ENCODE measurements at regions of chr9 and their contacts with region 1.

Region 1: GRCh38 chr9:96758845-96759673 is 18.8 kb downstream of the ZNF510 start:
- DNase-seq: no peak
- ATAC-seq: no peak

Region 2: DNA sequence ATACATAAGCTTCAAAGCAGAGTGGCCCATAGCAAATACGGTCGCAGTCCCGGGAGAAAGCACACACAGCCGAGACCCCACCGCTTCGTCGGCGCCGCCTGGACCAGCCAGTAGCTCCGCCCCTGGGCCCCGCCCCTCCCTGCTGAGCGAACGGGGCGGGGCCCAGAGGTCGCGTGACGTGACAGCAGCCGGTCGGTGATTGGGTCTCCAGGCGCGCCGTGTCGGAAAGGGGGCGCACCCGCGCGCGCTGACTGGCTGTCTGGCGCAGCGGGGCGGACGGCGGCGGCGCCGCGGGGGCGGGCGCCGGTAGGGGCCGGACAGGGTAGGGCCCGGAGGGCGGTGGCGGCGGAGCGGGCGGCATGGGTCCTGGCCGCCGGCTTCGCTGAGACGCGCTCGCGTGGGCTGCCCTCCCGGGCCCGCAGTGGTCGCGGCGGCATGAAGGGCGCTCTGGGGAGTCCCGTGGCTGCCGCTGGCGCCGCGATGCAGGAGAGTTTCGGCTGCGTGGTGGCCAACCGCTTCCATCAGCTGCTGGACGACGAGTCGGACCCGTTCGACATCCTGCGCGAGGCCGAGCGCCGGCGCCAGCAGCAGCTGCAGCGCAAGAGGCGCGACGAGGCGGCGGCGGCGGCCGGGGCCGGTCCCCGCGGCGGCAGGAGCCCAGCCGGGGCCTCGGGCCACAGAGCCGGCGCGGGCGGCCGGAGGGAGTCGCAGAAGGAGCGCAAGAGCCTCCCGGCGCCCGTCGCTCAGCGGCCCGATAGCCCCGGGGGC is 309.0 kb before region 1 on chr9 and contains the start of gene HABP4:
- intact Hi-C with region 1: no loop called
- DNase-seq: peak; percentile 99
- ATAC-seq: peak; percentile 100
- total RNA-seq, gene HABP4: 25.8 TPM

Region 3: GRCh38 chr9:96540106-96540505 is 219.0 kb before region 1 on chr9:
- intact Hi-C with region 1: no loop called
- DNase-seq: no peak
- ATAC-seq: no peak

Region 4: GRCh38 chr9:96686548-96687335 is 72.3 kb before region 1 on chr9:
- intact Hi-C with region 1: no loop called
- DNase-seq: peak; percentile 90
- ATAC-seq: peak; percentile 97

Region 5: GRCh38 chr9:96818535-96818934 is 59.5 kb after region 1 on chr9:
- intact Hi-C with region 1: loop called (anchors 10 kb)
- DNase-seq: no peak
- ATAC-seq: no peak

Measured in Right ventricle myocardium inferior (tissue), 1 donor.